ENCODE measurements at regions of chr3 and their contacts with region 1.

Region 1: DNA sequence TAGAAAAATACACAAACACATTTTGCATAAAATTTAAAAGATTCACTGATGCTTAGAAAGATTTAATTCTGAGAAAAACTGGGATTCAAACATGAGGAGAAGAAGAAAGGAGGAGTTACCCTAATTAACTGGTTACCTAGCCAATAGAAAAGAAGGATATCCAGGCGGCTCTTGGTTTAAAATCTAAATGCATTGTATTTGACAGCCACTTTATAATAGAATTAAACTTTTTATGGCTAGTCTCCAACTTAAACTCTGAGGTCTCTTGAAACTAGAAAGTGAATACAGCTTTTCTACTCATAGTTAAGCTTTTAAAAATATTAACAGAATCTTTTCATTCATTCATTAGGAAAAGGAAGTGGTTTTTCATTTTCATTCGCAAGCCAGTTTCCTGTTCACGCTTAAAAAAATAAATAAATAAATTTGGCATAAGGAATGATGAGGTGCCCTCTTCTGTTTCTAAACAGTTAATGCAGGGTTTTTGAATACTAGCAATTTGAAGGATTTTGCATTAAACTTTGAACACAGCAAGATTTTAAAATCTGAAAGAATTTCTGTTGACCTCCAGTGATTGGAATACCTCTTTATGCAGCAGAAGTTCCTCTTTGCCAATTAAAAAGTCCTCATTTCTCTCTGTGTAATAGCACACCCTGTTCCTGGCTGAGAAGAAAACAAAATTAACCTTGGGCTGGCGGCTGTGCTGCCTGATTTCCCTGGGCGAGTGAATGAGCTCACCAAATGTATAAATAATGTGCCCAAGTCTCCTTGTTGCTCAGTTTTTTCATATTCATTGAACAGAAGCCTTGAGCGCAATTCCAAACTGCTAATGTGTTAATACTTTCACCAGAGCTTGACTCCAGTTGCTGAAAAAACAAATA is 105.1 kb downstream of the ZMAT3 start:
- DNase-seq: no peak
- H3K4me3 ChIP-seq: peak overlapping the region in 1 of 4 donors; percentile 2
- H3K27ac ChIP-seq: peak overlapping the region in 2 of 4 donors; percentile 17 to 18
- H3K4me1 ChIP-seq: peaks cover 0 to 18% (median 10%) of the 10 kb centered on the region in 4 donors
- H3K27me3 ChIP-seq: no peaks in the 10 kb centered on the region
- CTCF ChIP-seq: peak in 3 of 4 experiments; percentile 19 to 44 (median 27)
- EP300 ChIP-seq: no peak
- POLR2A ChIP-seq: no peak

Region 2: DNA sequence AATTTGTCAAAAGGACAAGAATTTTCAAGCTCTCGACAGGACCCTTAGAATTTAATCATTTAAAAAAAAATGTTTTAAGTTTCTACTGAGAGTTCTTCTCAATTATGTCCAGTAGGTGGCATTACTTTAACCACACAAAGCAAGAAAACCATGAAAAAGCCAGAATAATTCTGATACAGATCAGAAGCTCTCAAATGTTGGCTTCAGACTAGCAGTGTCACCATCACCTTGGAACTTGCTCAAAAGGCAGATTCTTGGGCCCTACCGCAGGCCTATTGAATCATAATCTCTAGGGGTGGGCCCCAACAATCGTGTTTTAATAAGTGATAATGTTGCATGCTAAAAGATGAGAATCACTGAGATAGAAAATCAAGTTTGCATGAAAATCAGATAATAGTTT is 529.8 kb before region 1 on chr3:
- intact Hi-C with region 1: loop called (anchors 2 kb)
- DNase-seq: no peak
- H3K4me3 ChIP-seq: no peak overlapping the region
- H3K27ac ChIP-seq: no peak overlapping the region
- H3K4me1 ChIP-seq: peaks cover 0 to 17% (median 4%) of the 10 kb centered on the region in 4 donors
- H3K27me3 ChIP-seq: no peaks in the 10 kb centered on the region
- CTCF ChIP-seq: peak in 3 of 4 experiments; percentile 14 to 55 (median 41)
- EP300 ChIP-seq: no peak
- POLR2A ChIP-seq: no peak